AG04450 (cell line): ENCODE measurements at regions of chr14 and their contacts with region 1.

Region 1: DNA sequence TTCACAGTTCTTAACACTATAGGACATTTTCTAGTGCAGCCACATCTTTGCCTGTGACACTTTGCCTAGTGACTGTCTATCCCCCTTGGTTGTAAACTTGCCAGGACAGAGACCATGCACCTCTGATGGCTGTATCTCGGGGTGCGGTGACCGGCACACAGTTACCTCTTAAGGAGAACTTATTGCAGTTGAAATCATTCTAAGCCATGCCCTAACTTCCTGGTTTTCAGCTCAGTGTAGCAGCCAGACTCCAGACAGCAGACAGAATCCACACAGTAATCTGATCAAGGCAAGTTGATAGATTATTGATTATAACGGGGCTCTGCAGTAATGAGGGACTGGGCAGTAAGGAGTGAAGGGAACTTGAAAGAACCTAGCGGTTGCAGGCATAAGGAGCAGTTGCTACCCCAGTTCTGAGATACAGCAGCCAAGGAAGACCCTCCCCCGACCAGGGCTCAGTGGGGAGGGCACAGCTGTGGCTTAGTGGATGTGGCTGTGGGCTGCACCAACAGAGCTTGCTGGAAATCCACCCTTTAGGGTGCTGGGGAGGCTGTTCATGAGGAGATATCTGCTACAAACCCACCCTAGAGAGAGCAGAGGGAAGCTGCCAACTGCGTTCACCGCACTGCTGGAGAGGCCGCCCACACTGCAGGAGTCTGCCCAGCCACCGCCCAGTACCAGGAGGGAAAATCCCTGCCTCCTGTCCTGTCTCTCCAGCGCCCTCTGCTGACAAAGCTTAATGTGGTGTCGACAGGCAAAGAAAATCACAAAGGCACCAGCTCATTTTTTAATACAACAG is 58.2 kb upstream of the BEGAIN start:
- DNase-seq: peak; percentile 55
- H3K4me3 ChIP-seq: no peak overlapping the region
- H3K27ac ChIP-seq: no peak overlapping the region
- H3K27me3 ChIP-seq: peaks cover 22% of the 10 kb centered on the region
- CTCF ChIP-seq: peak; percentile 81

Region 2: GRCh38 chr14:100422556-100423404 is 222.6 kb before region 1 on chr14:
- CTCF ChIA-PET with region 1: interaction called, 59 read pairs
- POLR2A ChIA-PET with region 1: interaction called, 3 read pairs
- DNase-seq: no peak
- H3K4me3 ChIP-seq: no peak overlapping the region
- H3K27ac ChIP-seq: no peak overlapping the region
- H3K27me3 ChIP-seq: no peaks in the 10 kb centered on the region
- CTCF ChIP-seq: no peak

Region 3: DNA sequence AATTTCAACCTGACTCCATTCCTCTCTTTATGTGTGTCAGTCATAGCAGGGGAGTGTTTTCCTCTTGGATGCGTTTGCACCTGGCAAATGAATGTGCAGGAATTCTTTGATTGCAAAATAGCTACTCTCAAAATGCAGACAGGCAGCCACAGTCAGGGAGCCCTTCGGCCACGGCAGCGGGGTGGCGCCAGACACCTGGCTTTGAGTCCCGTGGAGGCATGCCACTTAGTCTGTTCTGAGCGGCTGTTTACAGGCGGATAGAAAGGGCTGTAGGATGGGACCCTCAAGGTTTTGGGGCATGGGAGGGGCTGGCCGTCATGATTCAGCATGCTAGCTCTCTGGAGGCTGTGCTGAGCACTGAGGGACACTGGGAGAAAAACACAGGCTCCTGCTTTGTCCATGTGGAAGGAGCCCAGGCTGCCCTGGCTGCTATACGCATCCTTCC is 205.2 kb before region 1 on chr14:
- CTCF ChIA-PET with region 1: interaction called, 12 read pairs
- POLR2A ChIA-PET with region 1: no interaction called
- DNase-seq: peak; percentile 15
- H3K4me3 ChIP-seq: no peak overlapping the region
- H3K27ac ChIP-seq: peak overlapping the region; percentile 39
- H3K27me3 ChIP-seq: no peaks in the 10 kb centered on the region
- CTCF ChIP-seq: peak; percentile 62